CD14-positive monocyte (primary cell): ENCODE measurements at regions of chr1 and their contacts with region 1.

Region 1: GRCh38 chr1:150186789-150187559 is 37.3 kb downstream of the PLEKHO1 start:
- DNase-seq: peak; percentile 79 to 91 (median 85)
- H3K4me3 ChIP-seq: peak overlapping the region; percentile 43 to 70 (median 47)
- H3K4me3 Mint-ChIP-seq: peak overlapping the region; percentile 56 to 85
- H3K27ac ChIP-seq: peak overlapping the region; percentile 82 to 88
- H3K27ac Mint-ChIP-seq: peak overlapping the region; percentile 93 to 97 (median 95)
- H3K4me1 ChIP-seq: peaks cover 58% of the 10 kb centered on the region in 2 donors
- H3K4me1 Mint-ChIP-seq: peaks cover 47% of the 10 kb centered on the region
- H3K27me3 ChIP-seq: no peaks in the 10 kb centered on the region
- H3K27me3 Mint-ChIP-seq: peaks cover 0 to 4% (median 0%) of the 10 kb centered on the region in 3 donors
- CTCF ChIP-seq: peak; percentile 89

Region 2: DNA sequence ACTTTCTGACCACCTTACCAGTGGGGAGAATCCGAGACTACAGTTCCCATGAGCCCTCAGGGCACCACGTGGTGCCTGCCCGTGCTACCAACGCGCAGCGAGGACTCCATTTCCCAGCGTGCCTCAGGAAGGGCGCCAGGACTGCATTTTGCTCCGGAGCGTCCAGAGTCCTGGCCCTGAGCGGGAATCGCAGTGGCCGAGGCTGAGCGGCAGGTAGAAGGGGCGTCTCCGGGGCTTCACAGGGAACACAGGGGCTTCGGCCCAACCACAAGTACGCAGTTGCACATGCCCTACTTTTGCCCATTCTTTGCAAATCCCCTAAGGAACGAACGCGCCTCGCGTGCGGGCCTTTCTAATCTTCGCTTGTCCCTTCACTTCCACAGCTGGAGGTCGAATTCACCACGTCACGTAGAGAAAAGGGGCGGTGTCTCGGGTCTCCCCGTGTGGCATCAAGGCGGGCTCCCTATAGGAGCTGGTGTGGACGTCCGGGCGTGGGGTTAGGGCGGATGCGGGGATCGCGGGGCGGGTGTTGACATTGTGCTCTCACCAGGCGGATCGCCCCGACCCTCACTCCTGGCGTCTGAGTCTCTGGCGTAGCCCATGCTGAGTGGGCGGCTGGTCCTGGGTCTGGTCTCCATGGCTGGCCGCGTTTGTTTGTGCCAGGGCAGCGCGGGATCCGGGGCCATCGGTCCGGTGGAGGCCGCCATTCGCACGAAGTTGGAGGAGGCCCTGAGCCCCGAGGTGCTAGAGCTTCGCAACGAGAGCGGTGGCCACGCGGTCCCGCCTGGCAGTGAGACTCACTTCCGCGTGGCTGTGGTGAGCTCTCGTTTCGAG is 287.3 kb before region 1 on chr1 and contains the start of gene BOLA1:
- intact Hi-C with region 1: loop called in 1 of 2 experiments (anchors 10 kb)
- DNase-seq: peak; percentile 78 to 85 (median 85)
- H3K4me3 ChIP-seq: peak within 1 kb of the TSS; percentile 49 to 78 (median 63)
- H3K4me3 Mint-ChIP-seq: peak within 1 kb of the TSS; percentile 86 to 93
- H3K27ac ChIP-seq: peak within 1 kb of the TSS; percentile 53 to 78
- H3K27ac Mint-ChIP-seq: peak within 1 kb of the TSS; percentile 84 to 95 (median 91)
- H3K4me1 ChIP-seq: peaks cover 8 to 17% of the 10 kb centered on the region in 2 donors
- H3K4me1 Mint-ChIP-seq: peaks cover 15% of the 10 kb centered on the region
- H3K27me3 ChIP-seq: no peaks in the 10 kb centered on the region
- H3K27me3 Mint-ChIP-seq: peaks cover 0 to 4% (median 0%) of the 10 kb centered on the region in 3 donors
- CTCF ChIP-seq: no peak
- polyA plus RNA-seq, gene BOLA1: 5.1 to 17.8 (median 17.6) TPM

Region 3: DNA sequence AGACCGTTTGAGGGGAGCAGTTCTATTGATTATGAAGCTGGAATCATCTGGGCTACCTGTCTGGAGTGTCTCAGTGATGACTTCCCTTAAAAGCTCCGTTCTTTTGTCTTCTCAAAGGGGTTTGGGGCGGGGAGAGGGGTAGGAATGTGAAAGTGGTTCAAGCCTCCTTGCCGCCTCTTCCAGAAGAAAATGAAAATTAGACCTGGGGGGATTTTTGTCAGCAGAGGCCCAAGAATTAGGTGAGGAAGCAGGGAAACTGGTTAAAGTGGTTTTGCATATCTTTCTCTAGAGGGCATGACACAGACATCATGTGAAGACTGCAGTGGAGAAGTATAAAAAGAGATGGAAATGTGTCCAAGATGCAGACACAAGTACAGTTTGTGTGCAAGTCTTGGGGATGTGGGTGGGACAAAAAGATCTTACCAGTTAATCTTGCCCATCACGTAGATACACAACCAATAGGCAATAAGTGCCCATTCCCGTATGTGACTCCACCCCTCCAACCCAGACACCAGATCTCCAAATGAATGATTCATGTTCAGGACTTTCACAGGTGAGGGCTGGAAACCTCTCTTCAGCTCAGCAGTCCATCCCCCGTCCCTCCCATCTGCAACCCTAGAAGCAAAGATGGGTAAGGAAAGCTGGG is 249.8 kb before region 1 on chr1:
- intact Hi-C with region 1: loop called in 1 of 2 experiments (anchors 10 kb)
- DNase-seq: no peak
- H3K4me3 ChIP-seq: no peak overlapping the region
- H3K4me3 Mint-ChIP-seq: no peak overlapping the region
- H3K27ac ChIP-seq: no peak overlapping the region
- H3K27ac Mint-ChIP-seq: peak overlapping the region in 5 of 7 donors; percentile 11 to 90 (median 58)
- H3K4me1 ChIP-seq: peaks cover 37 to 61% of the 10 kb centered on the region in 2 donors
- H3K4me1 Mint-ChIP-seq: peaks cover 61% of the 10 kb centered on the region
- H3K27me3 ChIP-seq: no peaks in the 10 kb centered on the region
- H3K27me3 Mint-ChIP-seq: peaks cover 0 to 10% (median 0%) of the 10 kb centered on the region in 3 donors
- CTCF ChIP-seq: no peak

Region 4: GRCh38 chr1:150072959-150073358 is 114.0 kb before region 1 on chr1:
- intact Hi-C with region 1: loop called (anchors 5 kb)
- DNase-seq: peak in 2 of 3 donors; percentile 13 to 47
- H3K4me3 ChIP-seq: no peak overlapping the region
- H3K4me3 Mint-ChIP-seq: no peak overlapping the region
- H3K27ac ChIP-seq: no peak overlapping the region
- H3K27ac Mint-ChIP-seq: peak overlapping the region in 2 of 7 donors; percentile 15 to 55
- H3K4me1 ChIP-seq: peaks cover 10 to 13% of the 10 kb centered on the region in 2 donors
- H3K4me1 Mint-ChIP-seq: peaks cover 21% of the 10 kb centered on the region
- H3K27me3 ChIP-seq: no peaks in the 10 kb centered on the region
- H3K27me3 Mint-ChIP-seq: no peaks in the 10 kb centered on the region
- CTCF ChIP-seq: peak; percentile 74

Region 5: GRCh38 chr1:150149271-150150132 is 37.5 kb before region 1 on chr1 and contains the start of gene PLEKHO1:
- intact Hi-C with region 1: loop called in 1 of 2 experiments (anchors 5 kb)
- DNase-seq: peak; percentile 82 to 87 (median 84)
- H3K4me3 ChIP-seq: peak within 1 kb of the TSS; percentile 89 to 94 (median 93)
- H3K4me3 Mint-ChIP-seq: peak within 1 kb of the TSS; percentile 99
- H3K27ac ChIP-seq: peak within 1 kb of the TSS; percentile 53 to 97
- H3K27ac Mint-ChIP-seq: peak within 1 kb of the TSS; percentile 87 to 97 (median 91)
- H3K4me1 ChIP-seq: peaks cover 46 to 65% of the 10 kb centered on the region in 2 donors
- H3K4me1 Mint-ChIP-seq: peaks cover 69% of the 10 kb centered on the region
- H3K27me3 ChIP-seq: no peaks in the 10 kb centered on the region
- H3K27me3 Mint-ChIP-seq: peaks cover 15 to 26% (median 16%) of the 10 kb centered on the region in 3 donors
- CTCF ChIP-seq: no peak
- polyA plus RNA-seq, gene PLEKHO1: 87.2 to 170 (median 110) TPM

Region 6: GRCh38 chr1:150221552-150221951 is 34.6 kb after region 1 on chr1:
- intact Hi-C with region 1: no loop called
- DNase-seq: peak in 1 of 3 donors; percentile 16
- H3K4me3 ChIP-seq: no peak overlapping the region
- H3K4me3 Mint-ChIP-seq: no peak overlapping the region
- H3K27ac ChIP-seq: no peak overlapping the region
- H3K27ac Mint-ChIP-seq: peak overlapping the region in 1 of 7 donors; percentile 30
- H3K4me1 ChIP-seq: peaks cover 6% of the 10 kb centered on the region in 2 donors
- H3K4me1 Mint-ChIP-seq: peaks cover 11% of the 10 kb centered on the region
- H3K27me3 ChIP-seq: no peaks in the 10 kb centered on the region
- H3K27me3 Mint-ChIP-seq: no peaks in the 10 kb centered on the region
- CTCF ChIP-seq: peak; percentile 60

Region 7: DNA sequence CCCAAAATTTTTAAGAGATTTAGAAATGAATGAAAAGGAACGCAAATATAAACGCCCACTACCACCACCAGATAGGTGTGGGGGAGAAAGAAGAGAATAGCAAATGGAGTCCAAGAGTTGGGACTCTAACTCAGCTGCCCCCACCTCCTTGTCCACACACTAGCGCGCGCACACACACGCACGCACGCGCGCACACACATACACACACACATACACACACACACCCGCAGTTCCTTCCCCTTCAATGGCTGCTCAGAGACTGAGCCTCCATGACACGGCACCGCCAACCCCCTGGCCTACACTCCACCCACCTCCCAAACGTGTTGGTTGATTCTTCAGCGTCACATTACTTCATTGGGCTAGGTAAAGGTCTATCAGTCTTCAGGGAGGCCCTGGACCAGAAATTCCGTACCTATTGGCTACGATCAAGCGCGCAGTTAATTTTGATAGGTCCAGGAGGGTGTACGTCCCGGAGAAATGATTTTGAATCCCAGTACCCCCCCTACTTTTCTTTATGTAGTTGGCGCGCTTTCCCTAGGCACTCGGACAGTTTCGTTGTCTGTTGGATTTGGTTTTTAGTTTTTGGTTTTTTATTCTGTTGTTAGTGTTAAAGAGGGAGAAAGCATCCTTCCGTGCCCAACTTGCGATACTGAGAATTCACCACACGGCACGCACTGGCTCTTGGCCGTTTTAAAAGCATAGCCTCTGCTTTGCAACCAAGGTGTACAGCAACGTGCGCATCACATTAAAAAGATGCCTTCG is 49.1 kb after region 1 on chr1 and contains the start of gene ANP32E:
- intact Hi-C with region 1: loop called in 1 of 2 experiments (anchors 10 kb)
- DNase-seq: peak; percentile 96 to 97 (median 97)
- H3K4me3 ChIP-seq: peak within 1 kb of the TSS; percentile 81 to 89 (median 82)
- H3K4me3 Mint-ChIP-seq: peak within 1 kb of the TSS in 1 of 2 donors; percentile 31
- H3K27ac ChIP-seq: peak within 1 kb of the TSS; percentile 97
- H3K27ac Mint-ChIP-seq: peak within 1 kb of the TSS in 6 of 7 donors; percentile 96 to 99 (median 98)
- H3K4me1 ChIP-seq: peaks cover 24 to 25% of the 10 kb centered on the region in 2 donors
- H3K4me1 Mint-ChIP-seq: peaks cover 18% of the 10 kb centered on the region
- H3K27me3 ChIP-seq: no peaks in the 10 kb centered on the region
- H3K27me3 Mint-ChIP-seq: peaks cover 0 to 2% (median 1%) of the 10 kb centered on the region in 3 donors
- CTCF ChIP-seq: no peak
- polyA plus RNA-seq, gene ANP32E: 4.6 to 26.6 (median 20.4) TPM